ENCODE measurements at regions of chr10 and their contacts with region 1.

Region 1: GRCh38 chr10:13924040-13924725 is 337.4 kb downstream of the PRPF18 start:
- DNase-seq: peak; percentile 96
- ATAC-seq: peak; percentile 90
- H3K4me3 ChIP-seq: no peak overlapping the region
- H3K27ac ChIP-seq: peak overlapping the region; percentile 95
- H3K4me1 ChIP-seq: peaks cover 9% of the 10 kb centered on the region
- H3K27me3 ChIP-seq: no peaks in the 10 kb centered on the region
- CTCF ChIP-seq: no peak
- POLR2A ChIP-seq: 0 out of 2 replicates have a peak, but pooled peaks have one; percentile 26
- RAD21 ChIP-seq: no peak

Region 2: GRCh38 chr10:14009371-14010100 is 85.4 kb after region 1 on chr10:
- CTCF ChIA-PET with region 1: no interaction called
- POLR2A ChIA-PET with region 1: no interaction called
- dilution Hi-C with region 1: no loop called
- in situ Hi-C with region 1: no loop called
- intact Hi-C with region 1: loop called (anchors 1 kb)
- DNase-seq: peak; percentile 90
- ATAC-seq: peak; percentile 15
- H3K4me3 ChIP-seq: peak overlapping the region; percentile 32
- H3K27ac ChIP-seq: peak overlapping the region; percentile 85
- H3K4me1 ChIP-seq: peaks cover 5% of the 10 kb centered on the region
- H3K27me3 ChIP-seq: no peaks in the 10 kb centered on the region
- CTCF ChIP-seq: no peak
- POLR2A ChIP-seq: peak; percentile 76
- RAD21 ChIP-seq: 0 out of 2 replicates have a peak, but pooled peaks have one; percentile 1

Measured in IMR-90 (cell line).